CD8-positive, alpha-beta T cell (primary cell): ENCODE measurements at regions of chr5 and their contacts with region 1.

Region 1: GRCh38 chr5:6765612-6766525 is 52.6 kb downstream of the TENT4A start:
- DNase-seq: peak; percentile 27 to 68 (median 60)
- ATAC-seq: peak; percentile 80
- H3K4me3 ChIP-seq: no peak overlapping the region
- H3K4me3 Mint-ChIP-seq: no peak overlapping the region
- H3K27ac ChIP-seq: no peak overlapping the region
- H3K27ac Mint-ChIP-seq: no peak overlapping the region
- H3K4me1 ChIP-seq: no peaks in the 10 kb centered on the region
- H3K4me1 Mint-ChIP-seq: peaks cover 2% of the 10 kb centered on the region
- H3K27me3 ChIP-seq: no peaks in the 10 kb centered on the region
- H3K27me3 Mint-ChIP-seq: no peaks in the 10 kb centered on the region
- CTCF ChIP-seq: peak; percentile 58

Region 2: GRCh38 chr5:7815892-7816534 is 1050.1 kb after region 1 on chr5:
- CTCF ChIA-PET with region 1: no interaction called
- POLR2A ChIA-PET with region 1: no interaction called
- intact Hi-C with region 1: loop called in 1 of 2 experiments (anchors 2 kb)
- DNase-seq: peak; percentile 21 to 69 (median 49)
- ATAC-seq: peak; percentile 40
- H3K4me3 ChIP-seq: no peak overlapping the region
- H3K4me3 Mint-ChIP-seq: no peak overlapping the region
- H3K27ac ChIP-seq: no peak overlapping the region
- H3K27ac Mint-ChIP-seq: no peak overlapping the region
- H3K4me1 ChIP-seq: no peaks in the 10 kb centered on the region
- H3K4me1 Mint-ChIP-seq: no peaks in the 10 kb centered on the region
- H3K27me3 ChIP-seq: peaks cover 0 to 2% of the 10 kb centered on the region in 2 experiments
- H3K27me3 Mint-ChIP-seq: peaks cover 34% of the 10 kb centered on the region
- CTCF ChIP-seq: peak; percentile 49

Region 3: DNA sequence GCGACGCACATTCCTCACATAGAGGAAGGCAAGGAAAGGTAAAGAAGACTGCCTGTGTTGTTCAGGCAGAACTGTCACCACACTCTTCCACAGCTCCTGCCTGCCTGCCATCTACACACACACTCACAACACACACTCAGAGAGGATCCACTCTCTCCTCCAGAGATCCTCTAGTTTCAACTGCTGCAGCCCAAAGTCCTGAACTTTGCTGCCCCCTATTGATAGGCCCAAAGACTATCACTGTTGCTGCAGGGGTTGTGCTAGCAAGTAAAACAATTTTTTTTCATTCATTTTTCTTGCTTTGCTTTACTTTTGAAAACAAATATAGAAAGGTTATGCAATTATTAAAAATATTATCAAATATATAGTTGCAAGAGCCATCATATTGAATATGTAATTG is 1091.0 kb after region 1 on chr5:
- CTCF ChIA-PET with region 1: interaction called, 4 read pairs
- POLR2A ChIA-PET with region 1: no interaction called
- intact Hi-C with region 1: loop called in 1 of 2 experiments (anchors 10 kb)
- DNase-seq: peak in 2 of 9 experiments; percentile 28 to 44
- ATAC-seq: peak; percentile 54
- H3K4me3 ChIP-seq: no peak overlapping the region
- H3K4me3 Mint-ChIP-seq: no peak overlapping the region
- H3K27ac ChIP-seq: no peak overlapping the region
- H3K27ac Mint-ChIP-seq: no peak overlapping the region
- H3K4me1 ChIP-seq: peaks cover 2% of the 10 kb centered on the region
- H3K4me1 Mint-ChIP-seq: peaks cover 10% of the 10 kb centered on the region
- H3K27me3 ChIP-seq: no peaks in the 10 kb centered on the region
- H3K27me3 Mint-ChIP-seq: no peaks in the 10 kb centered on the region
- CTCF ChIP-seq: peak; percentile 43